Breast epithelium (tissue), 4 donors: ENCODE measurements at regions of chr2 and their contacts with region 1.

Region 1: DNA sequence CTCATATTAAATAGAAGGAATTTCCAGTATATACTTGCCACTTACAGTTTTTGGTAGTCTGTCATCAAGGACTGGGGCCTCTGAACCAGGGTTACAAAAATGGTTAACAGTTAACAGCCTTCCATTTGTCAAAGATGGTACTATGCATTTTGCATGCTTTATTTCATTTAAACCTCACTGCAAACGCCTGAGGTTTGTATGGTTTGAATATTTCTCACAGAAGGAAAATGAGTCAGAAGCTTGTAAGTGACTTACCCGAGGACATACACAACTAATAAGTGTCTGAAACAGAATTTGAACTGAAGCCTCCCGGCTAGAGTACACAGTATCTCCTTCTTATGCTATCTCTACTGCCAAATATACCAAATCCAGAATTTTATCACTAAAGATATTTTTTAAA is 1593.5 kb upstream of the ACVR2A start:
- DNase-seq: no peak
- H3K4me3 ChIP-seq: no peak overlapping the region
- H3K27ac ChIP-seq: no peak overlapping the region
- H3K4me1 ChIP-seq: no peaks in the 10 kb centered on the region
- H3K27me3 ChIP-seq: no peaks in the 10 kb centered on the region
- CTCF ChIP-seq: no peak
- POLR2A ChIP-seq: no peak

Region 2: DNA sequence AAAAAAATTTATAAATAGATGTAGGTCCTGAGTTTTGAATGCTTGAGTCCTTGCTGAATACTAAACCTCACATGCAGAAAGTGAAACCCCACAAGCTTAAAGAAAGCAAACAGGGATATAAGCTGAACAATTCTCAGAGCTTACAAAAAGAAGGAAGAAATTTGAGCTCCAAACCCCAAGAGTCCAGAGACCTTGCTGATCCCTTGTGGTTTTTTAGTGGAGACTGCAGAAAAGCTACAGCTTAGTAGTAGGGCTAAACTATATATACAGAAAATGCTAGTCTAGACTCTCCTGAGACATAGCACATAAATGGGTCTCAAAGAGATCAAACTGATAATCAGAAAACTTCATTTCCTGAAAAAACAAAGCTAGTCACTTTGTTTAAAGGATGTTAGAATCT is 183.3 kb before region 1 on chr2:
- intact Hi-C with region 1: loop called (anchors 5 kb)
- DNase-seq: no peak
- H3K4me3 ChIP-seq: no peak overlapping the region
- H3K27ac ChIP-seq: no peak overlapping the region
- H3K4me1 ChIP-seq: no peaks in the 10 kb centered on the region
- H3K27me3 ChIP-seq: no peaks in the 10 kb centered on the region
- CTCF ChIP-seq: no peak
- POLR2A ChIP-seq: no peak

Region 3: DNA sequence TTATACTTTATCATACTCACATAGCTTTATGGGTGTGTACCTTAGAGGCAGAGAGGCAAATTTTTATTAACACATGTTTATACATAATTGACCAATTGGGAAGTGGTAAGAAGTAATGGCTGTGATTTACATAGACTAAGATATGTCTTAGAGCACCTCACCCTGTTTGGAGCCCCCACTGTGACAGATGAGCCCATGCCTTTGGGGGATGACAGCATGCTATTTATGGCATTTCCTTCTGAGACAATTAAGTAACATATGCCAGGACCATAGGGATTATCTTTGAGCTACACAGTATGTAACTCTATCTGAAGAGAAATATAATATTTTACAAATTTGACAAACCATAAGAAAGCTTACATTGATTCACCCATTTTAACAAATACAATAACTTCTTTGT is 61.8 kb before region 1 on chr2:
- intact Hi-C with region 1: no loop called
- DNase-seq: no peak
- H3K4me3 ChIP-seq: no peak overlapping the region
- H3K27ac ChIP-seq: no peak overlapping the region
- H3K4me1 ChIP-seq: no peaks in the 10 kb centered on the region
- H3K27me3 ChIP-seq: no peaks in the 10 kb centered on the region
- CTCF ChIP-seq: no peak
- POLR2A ChIP-seq: no peak